Right cardiac atrium (tissue), 5 donors: ENCODE measurements at regions of chr17 and their contacts with region 1.

Region 1: GRCh38 chr17:48791128-48792032 is 25.6 kb downstream of the TTLL6 start:
- DNase-seq: peak; percentile 77 to 82 (median 78)
- ATAC-seq: peak; percentile 86 to 87
- H3K4me3 ChIP-seq: no peak overlapping the region
- H3K27ac ChIP-seq: no peak overlapping the region
- H3K4me1 ChIP-seq: no peaks in the 10 kb centered on the region
- H3K27me3 ChIP-seq: no peaks in the 10 kb centered on the region

Region 2: DNA sequence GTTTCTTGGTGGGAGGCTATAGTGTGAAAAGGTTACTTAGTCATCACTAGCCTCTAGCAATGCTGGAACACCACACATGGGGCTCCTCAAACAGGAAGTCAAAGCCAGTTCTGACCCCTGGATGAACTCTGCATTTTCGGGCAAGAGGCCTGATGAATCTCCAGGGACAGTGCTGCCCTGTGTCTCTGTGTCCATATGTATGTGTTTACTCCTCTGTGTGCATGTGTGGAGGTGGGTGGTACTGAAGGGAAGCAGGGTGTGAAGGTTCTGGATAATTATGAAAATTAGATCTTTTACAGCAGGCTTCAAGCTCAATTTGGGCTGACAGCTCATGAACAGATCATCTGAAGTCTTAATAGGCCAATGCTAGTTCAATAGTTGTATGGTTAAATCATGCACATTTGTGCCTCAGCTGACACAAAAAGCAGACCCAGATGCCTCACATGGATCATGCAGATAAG is 550.2 kb before region 1 on chr17:
- intact Hi-C with region 1: no loop called
- DNase-seq: peak; percentile 31 to 67 (median 60)
- ATAC-seq: peak; percentile 87 to 92
- H3K4me3 ChIP-seq: no peak overlapping the region
- H3K27ac ChIP-seq: peak overlapping the region; percentile 31
- H3K4me1 ChIP-seq: peaks cover 14% of the 10 kb centered on the region
- H3K27me3 ChIP-seq: no peaks in the 10 kb centered on the region

Region 3: DNA sequence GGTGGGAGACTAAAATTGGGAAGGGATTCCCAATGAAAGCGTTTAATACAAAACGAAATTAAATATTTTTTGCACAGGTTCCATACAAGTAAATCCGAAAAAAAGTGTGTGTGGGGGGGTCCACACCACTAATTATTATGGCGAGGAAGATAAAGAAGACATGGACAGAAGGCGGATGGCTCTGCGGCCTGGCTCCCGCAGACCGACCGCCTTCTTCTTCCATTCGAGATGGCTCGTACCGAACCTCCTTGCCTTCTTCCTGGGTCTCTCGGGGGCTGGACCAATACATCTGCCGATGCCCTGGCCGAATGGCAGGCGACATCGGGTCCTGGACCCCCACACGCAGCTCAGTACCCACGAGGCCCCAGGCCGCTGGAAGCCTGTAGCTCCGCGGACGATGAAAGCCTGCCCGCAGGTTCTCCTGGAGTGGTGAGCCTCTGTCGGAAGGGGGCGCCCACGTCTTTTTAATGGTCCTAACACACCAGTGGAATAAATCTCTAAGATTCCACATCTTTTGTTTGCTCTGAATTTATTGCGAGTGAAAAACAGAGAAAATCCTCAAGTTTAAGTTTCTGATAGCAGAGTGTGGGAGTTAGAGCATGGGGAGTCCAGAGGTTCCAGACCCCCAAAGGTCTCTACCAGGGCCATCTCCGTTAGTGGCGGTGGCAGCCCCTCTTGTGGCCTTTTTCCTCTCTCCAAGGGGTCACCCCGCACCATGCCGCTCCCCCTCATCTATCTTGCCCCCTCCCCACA is 67.0 kb before region 1 on chr17:
- intact Hi-C with region 1: loop called in 3 of 4 experiments (anchors 2 to 5 kb)
- DNase-seq: peak; percentile 88 to 95 (median 92)
- ATAC-seq: peak; percentile 82 to 89
- H3K4me3 ChIP-seq: no peak overlapping the region
- H3K27ac ChIP-seq: no peak overlapping the region
- H3K4me1 ChIP-seq: no peaks in the 10 kb centered on the region
- H3K27me3 ChIP-seq: no peaks in the 10 kb centered on the region

Region 4: GRCh38 chr17:49076573-49077384 is 285.4 kb after region 1 on chr17:
- intact Hi-C with region 1: no loop called
- DNase-seq: no peak
- ATAC-seq: peak in 1 of 2 donors; percentile 71
- H3K4me3 ChIP-seq: no peak overlapping the region
- H3K27ac ChIP-seq: no peak overlapping the region
- H3K4me1 ChIP-seq: no peaks in the 10 kb centered on the region
- H3K27me3 ChIP-seq: no peaks in the 10 kb centered on the region